ENCODE measurements at regions of chr11 and their contacts with region 1.

Region 1: DNA sequence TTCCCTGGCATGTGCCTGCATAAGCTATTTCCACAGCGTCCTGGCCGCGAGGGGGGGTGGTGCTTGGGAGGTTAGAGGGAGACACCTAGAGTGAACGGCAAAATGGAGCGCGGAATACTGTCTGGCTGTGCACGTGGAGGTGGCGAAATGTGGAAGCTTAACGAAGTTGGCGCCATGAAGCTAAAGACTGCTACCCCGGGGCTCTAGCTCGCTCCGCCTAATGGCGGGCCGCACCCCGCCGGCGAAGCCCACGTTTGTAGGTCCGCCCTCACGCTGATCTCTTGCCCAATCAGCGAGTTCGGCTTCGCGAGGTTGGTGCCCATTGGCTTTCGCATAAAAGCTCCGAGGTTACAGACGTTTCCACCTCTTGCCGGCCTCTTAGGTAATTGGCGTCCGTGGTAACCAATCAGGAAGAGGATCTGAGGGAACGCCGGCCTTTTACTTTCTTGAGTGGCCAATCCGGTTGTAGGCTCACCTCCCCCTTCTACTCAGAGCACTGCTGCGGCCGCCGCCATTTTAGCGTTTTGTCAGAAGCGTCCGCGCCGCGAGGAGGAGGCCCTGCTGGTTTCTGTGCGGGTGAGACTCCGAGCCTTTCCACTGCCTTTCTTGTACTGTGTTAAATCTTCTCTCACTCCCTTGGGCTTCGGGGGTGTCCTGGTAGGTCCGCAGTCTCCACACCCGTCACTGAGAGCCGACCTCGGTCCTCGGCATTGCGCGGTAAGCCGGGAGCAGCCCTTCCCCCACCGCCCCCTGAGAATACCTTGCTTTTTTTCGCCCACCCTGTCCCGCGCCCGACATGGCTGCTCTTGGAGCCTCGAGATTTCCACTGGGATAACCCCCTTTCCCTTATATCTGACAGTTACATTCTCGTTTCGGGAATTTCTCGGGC is at the start of gene RBM4:
- DNase-seq: peak; percentile 95 to 100 (median 98)
- ATAC-seq: peak; percentile 95
- H3K4me3 ChIP-seq: peak within 1 kb of the TSS; percentile 73
- H3K27ac ChIP-seq: peak within 1 kb of the TSS; percentile 96
- H3K4me1 ChIP-seq: peaks cover 18 to 24% of the 10 kb centered on the region in 2 experiments
- H3K27me3 ChIP-seq: no peaks in the 10 kb centered on the region
- CTCF ChIP-seq: peak in 1 of 3 experiments; percentile 28; a peak in 1 of 6 replicates
- EP300 ChIP-seq: no peak
- POLR2A ChIP-seq: peak; percentile 96
- RAD21 ChIP-seq: no peak; a peak in 1 of 4 replicates
- polyA plus RNA-seq, gene RBM4: 223 to 233 TPM

Region 2: DNA sequence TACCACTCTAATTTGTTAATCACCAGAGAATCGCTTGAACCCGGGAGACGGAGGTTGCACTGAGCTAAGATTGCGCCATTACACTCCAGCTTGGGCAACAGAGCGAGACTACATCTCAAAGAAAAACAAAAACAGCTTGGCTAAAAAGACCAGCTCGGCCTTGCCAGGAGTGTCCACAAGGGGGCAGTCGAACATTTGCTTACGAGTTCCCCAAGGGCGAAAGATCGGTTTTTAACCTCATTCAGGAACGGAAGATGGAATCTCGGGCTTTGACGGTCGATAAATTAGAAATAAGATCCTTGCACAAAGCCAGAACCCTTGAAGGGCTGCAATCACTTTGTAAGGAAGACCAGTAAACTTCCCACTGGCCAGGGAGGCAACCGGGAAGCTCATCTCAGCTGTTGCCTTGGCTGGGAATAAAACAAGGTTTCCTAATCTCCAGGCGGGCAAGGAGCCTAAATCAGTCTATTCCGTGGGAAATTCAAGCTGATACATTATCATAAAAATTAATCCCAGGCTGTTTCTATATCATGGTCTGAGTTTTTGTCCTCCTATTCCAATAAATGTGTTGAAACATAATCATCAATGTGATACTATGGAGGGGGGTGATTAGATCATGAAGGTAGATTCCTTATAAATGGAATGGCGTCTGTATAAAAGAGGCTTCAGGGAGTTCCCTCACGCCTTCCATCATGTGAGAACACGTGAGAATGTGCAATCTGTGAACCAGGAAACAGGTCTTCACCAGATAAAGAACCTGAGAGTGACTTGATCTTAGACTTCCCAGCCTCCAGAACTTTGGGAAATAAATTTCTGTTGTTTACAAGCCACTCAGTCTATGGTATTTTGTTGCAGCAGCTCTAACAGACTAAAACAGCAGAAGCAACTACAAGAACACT is 252.0 kb before region 1 on chr11:
- CTCF ChIA-PET with region 1: no interaction called
- POLR2A ChIA-PET with region 1: no interaction called
- in situ Hi-C with region 1: no loop called
- intact Hi-C with region 1: no loop called
- DNase-seq: peak; percentile 55 to 90 (median 62)
- ATAC-seq: peak; percentile 87
- H3K4me3 ChIP-seq: no peak overlapping the region; the same call in 1 of the 2 replicates
- H3K27ac ChIP-seq: no peak overlapping the region
- H3K4me1 ChIP-seq: peaks cover 0 to 5% of the 10 kb centered on the region in 2 experiments; a peak in 2 of 5 replicates
- H3K27me3 ChIP-seq: peaks cover 0 to 7% of the 10 kb centered on the region in 2 experiments; a peak in 2 of 5 replicates
- CTCF ChIP-seq: peak; percentile 85 to 95 (median 94)
- EP300 ChIP-seq: no peak
- POLR2A ChIP-seq: no peak
- RAD21 ChIP-seq: peak; percentile 64 to 78

Region 3: DNA sequence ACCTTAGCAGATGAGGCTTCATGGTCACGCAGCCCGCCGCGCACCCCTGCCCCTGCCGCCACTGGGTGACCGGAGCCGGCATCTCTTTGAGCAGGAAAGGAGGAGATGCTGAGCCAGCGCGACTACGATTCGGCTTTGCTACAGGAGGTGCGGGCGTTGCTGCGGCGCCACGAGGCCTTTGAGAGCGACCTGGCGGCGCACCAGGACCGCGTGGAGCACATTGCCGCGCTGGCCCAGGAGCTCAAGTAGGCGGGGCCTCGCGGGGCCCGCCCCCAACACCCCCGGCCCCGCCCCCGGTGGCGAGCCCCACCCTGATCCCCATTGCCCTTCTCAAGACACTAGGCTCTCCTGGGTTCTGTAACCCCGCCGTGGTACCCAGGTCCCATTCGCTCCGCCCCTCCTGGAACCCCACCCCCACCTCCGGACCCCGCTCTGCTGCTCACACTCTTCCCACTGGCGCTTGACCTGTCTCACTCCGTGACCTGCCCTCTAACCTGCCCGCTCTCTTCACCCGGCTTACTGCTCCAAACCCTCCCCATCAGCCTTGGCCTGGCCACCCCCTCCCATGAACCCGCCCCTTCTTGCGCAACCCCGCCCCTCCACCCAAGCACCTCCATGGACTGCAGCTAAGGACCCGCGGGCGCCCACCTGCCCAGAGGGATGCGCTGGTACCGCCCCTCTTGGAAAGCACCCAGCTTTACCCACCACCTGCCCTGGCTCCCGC is 79.1 kb before region 1 on chr11:
- CTCF ChIA-PET with region 1: no interaction called
- POLR2A ChIA-PET with region 1: interaction called, 15 read pairs
- in situ Hi-C with region 1: no loop called
- intact Hi-C with region 1: no loop called
- DNase-seq: peak; percentile 70 to 96 (median 93)
- ATAC-seq: peak; percentile 88
- H3K4me3 ChIP-seq: no peak overlapping the region
- H3K27ac ChIP-seq: no peak overlapping the region
- H3K4me1 ChIP-seq: peaks cover 8 to 38% of the 10 kb centered on the region in 2 experiments; a peak in 4 of 5 replicates
- H3K27me3 ChIP-seq: no peaks in the 10 kb centered on the region
- CTCF ChIP-seq: no peak
- EP300 ChIP-seq: no peak
- POLR2A ChIP-seq: no peak
- RAD21 ChIP-seq: no peak

Region 4: DNA sequence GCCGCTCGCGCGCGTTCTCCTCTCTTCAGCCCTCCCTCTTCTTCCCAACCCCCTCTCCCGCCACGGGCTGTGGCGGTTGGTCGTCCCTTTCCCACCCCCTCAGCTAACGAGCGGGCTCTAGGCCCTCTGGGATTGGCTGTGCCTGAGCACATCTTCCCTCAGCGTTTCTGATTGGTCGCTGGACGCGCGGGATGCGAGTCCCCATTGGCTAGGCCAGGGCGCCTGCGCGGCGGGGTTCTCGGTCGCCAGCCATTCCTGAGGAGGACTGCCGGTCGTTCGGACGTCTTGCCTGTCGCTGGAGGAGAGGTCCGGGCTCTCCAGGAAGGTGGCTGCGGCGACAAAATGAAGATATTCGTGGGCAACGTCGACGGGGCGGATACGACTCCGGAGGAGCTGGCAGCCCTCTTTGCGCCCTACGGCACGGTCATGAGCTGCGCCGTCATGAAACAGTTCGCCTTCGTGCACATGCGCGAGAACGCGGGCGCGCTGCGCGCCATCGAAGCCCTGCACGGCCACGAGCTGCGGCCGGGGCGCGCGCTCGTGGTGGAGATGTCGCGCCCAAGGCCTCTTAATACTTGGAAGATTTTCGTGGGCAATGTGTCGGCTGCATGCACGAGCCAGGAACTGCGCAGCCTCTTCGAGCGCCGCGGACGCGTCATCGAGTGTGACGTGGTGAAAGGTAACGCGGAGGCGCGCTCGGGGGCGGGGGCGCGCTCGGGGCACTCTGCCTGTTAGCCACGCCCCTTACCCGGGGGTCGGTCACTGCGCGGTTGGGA is 21.9 kb before region 1 on chr11 and contains the start of gene RBM14:
- CTCF ChIA-PET with region 1: no interaction called
- POLR2A ChIA-PET with region 1: interaction called, 387 read pairs
- in situ Hi-C with region 1: no loop called
- intact Hi-C with region 1: no loop called
- DNase-seq: peak; percentile 99 to 100 (median 100)
- ATAC-seq: peak; percentile 98
- H3K4me3 ChIP-seq: peak within 1 kb of the TSS; percentile 94
- H3K27ac ChIP-seq: peak within 1 kb of the TSS; percentile 99
- H3K4me1 ChIP-seq: peaks cover 21 to 31% of the 10 kb centered on the region in 2 experiments
- H3K27me3 ChIP-seq: no peaks in the 10 kb centered on the region
- CTCF ChIP-seq: no peak
- EP300 ChIP-seq: peak; percentile 66
- POLR2A ChIP-seq: peak; percentile 100
- RAD21 ChIP-seq: 0 out of 4 replicates have a peak, but pooled peaks have one; percentile 4 to 8
- polyA plus RNA-seq, gene RBM14: 5.5 to 8.9 TPM

Region 5: GRCh38 chr11:66651016-66651415 is 12.6 kb after region 1 on chr11:
- CTCF ChIA-PET with region 1: no interaction called
- POLR2A ChIA-PET with region 1: interaction called, 139 read pairs
- in situ Hi-C with region 1: no loop called
- intact Hi-C with region 1: no loop called
- DNase-seq: no peak
- ATAC-seq: no peak
- H3K4me3 ChIP-seq: no peak overlapping the region
- H3K27ac ChIP-seq: no peak overlapping the region
- H3K4me1 ChIP-seq: peaks cover 0 to 9% of the 10 kb centered on the region in 2 experiments; a peak in 2 of 5 replicates
- H3K27me3 ChIP-seq: no peaks in the 10 kb centered on the region
- CTCF ChIP-seq: no peak
- EP300 ChIP-seq: no peak
- POLR2A ChIP-seq: 0 out of 2 replicates have a peak, but pooled peaks have one; percentile 18
- RAD21 ChIP-seq: no peak

Region 6: DNA sequence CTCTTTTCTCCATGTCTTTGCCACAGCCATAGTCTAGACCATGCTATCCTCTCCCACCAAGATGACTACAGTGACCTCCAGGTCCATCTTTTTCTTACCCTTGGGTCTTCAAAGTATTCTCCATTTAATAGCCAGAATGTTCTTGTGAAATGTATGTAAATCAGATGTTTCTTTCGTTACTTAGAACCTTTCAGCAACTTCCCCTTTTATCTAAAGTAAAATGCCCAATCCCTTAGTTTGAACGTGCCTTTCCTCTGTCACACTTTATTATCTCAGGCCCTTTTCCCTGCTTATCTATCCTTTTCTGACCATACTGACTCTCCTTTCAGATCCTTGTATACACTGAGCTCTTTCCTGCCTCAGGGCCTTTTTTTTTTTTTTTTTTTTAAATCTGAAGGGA is 21.3 kb after region 1 on chr11:
- CTCF ChIA-PET with region 1: no interaction called
- POLR2A ChIA-PET with region 1: interaction called, 139 read pairs
- in situ Hi-C with region 1: no loop called
- intact Hi-C with region 1: no loop called
- DNase-seq: peak in 1 of 4 experiments; percentile 49
- ATAC-seq: peak; percentile 74
- H3K4me3 ChIP-seq: no peak overlapping the region
- H3K27ac ChIP-seq: peak overlapping the region; percentile 26; the same call in 1 of the 3 replicates
- H3K4me1 ChIP-seq: peaks cover 0 to 7% of the 10 kb centered on the region in 2 experiments; a peak in 3 of 5 replicates
- H3K27me3 ChIP-seq: no peaks in the 10 kb centered on the region
- CTCF ChIP-seq: no peak
- EP300 ChIP-seq: no peak
- POLR2A ChIP-seq: peak; percentile 14; the same call in 1 of the 2 replicates
- RAD21 ChIP-seq: no peak

Region 7: GRCh38 chr11:66745341-66746189 is 107.1 kb after region 1 on chr11:
- CTCF ChIA-PET with region 1: no interaction called
- POLR2A ChIA-PET with region 1: no interaction called
- in situ Hi-C with region 1: no loop called
- intact Hi-C with region 1: no loop called
- DNase-seq: peak; percentile 44 to 51 (median 46)
- ATAC-seq: peak; percentile 67
- H3K4me3 ChIP-seq: peak overlapping the region; percentile 82
- H3K27ac ChIP-seq: peak overlapping the region; percentile 62; the same call in 1 of the 3 replicates
- H3K4me1 ChIP-seq: peaks cover 6 to 31% of the 10 kb centered on the region in 2 experiments; a peak in 4 of 5 replicates
- H3K27me3 ChIP-seq: no peaks in the 10 kb centered on the region
- CTCF ChIP-seq: no peak
- EP300 ChIP-seq: no peak
- POLR2A ChIP-seq: no peak
- RAD21 ChIP-seq: no peak

Measured in K562 (cell line).